ENCODE measurements at regions of chr4 and their contacts with region 1.

Region 1: DNA sequence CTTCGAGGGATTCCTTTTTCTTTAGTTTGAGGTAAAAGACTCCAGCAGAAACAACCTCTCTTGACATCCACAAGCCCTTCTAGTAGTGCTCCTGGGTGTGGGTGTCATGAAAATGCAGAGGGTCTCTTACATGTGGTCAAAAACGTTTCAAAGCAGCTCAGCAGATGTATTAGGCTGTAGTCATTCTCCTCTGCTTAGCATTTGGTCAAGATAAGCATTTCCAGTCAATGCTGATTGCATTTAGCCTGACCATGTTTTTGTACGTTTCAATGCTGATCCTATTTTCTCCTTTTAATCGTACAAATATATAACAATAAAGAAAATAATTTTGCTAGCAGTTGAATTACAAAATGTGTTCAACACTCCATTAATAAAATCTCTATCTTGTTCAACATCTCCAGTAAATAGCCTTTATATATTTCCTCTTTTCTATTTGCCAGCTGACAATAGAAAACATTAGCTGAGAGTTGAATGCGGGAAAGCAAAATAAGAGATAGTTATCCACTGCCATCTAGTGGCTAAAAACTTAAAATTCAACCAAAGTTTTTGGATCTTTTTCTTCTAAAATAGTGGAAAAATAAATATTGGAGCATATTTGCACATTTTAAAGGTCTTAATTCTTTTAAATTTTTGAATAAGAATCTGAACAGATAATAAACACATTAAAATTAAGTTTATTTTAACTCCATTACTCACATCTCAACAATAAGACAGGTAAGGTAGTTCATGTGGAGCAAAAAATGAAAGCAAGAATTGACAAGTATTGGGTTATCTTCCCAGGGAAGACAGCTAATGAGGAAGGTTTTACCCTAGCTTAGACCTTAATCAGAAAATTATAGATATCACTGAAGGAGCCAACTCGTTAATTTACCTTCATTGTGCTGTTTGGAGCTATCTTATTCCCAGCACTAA is 15.2 kb upstream of the PACRGL start:
- DNase-seq: no peak
- ATAC-seq: no peak
- H3K4me3 ChIP-seq: no peak overlapping the region
- H3K27ac ChIP-seq: no peak overlapping the region
- H3K4me1 ChIP-seq: no peaks in the 10 kb centered on the region
- H3K27me3 ChIP-seq: peaks cover 0 to 18% (median 0%) of the 10 kb centered on the region in 9 donors
- CTCF ChIP-seq: peak; percentile 47 to 81 (median 66)
- POLR2A ChIP-seq: no peak

Region 2: GRCh38 chr4:18689308-18690115 is 1995.6 kb before region 1 on chr4:
- intact Hi-C with region 1: loop called (anchors 2 to 10 kb)
- DNase-seq: peak in 2 of 5 donors; percentile 16 to 26
- ATAC-seq: peak in 1 of 4 donors; percentile 54
- H3K4me3 ChIP-seq: no peak overlapping the region
- H3K27ac ChIP-seq: no peak overlapping the region
- H3K4me1 ChIP-seq: peaks cover 0 to 10% (median 0%) of the 10 kb centered on the region in 12 donors
- H3K27me3 ChIP-seq: no peaks in the 10 kb centered on the region
- CTCF ChIP-seq: peak; percentile 75 to 89 (median 84)
- POLR2A ChIP-seq: no peak

Region 3: DNA sequence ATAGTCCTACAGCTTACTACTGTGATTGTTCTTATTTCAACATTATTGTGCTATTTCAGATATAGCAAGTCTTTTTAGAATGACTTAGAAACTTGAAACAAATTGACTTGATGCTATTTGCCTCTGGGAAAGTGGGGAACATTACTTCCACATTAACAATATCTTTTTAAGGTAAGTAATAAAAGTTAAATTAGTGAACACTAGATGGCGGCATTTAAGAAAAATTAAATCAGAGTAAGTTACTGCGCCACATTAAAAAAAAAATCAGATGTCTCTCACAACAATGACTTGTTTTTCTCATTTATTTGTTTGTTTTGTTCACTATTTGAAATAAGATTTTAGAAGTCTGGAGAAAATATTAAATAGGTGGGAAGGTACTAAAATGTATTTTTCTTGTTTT is 1460.3 kb before region 1 on chr4:
- intact Hi-C with region 1: loop called in 6 of 10 experiments (anchors 5 to 10 kb)
- DNase-seq: no peak
- ATAC-seq: no peak
- H3K4me3 ChIP-seq: no peak overlapping the region
- H3K27ac ChIP-seq: no peak overlapping the region
- H3K4me1 ChIP-seq: no peaks in the 10 kb centered on the region
- H3K27me3 ChIP-seq: no peaks in the 10 kb centered on the region
- CTCF ChIP-seq: peak; percentile 21 to 61 (median 39)
- POLR2A ChIP-seq: no peak

Region 4: GRCh38 chr4:20299515-20299914 is 385.6 kb before region 1 on chr4:
- intact Hi-C with region 1: loop called in 1 of 10 experiments (anchors 10 kb)
- DNase-seq: no peak
- ATAC-seq: no peak
- H3K4me3 ChIP-seq: no peak overlapping the region
- H3K27ac ChIP-seq: no peak overlapping the region
- H3K4me1 ChIP-seq: no peaks in the 10 kb centered on the region
- H3K27me3 ChIP-seq: no peaks in the 10 kb centered on the region
- CTCF ChIP-seq: peak in 6 of 12 donors; percentile 23 to 54 (median 34)
- POLR2A ChIP-seq: no peak

Region 5: GRCh38 chr4:20422398-20422797 is 262.7 kb before region 1 on chr4:
- intact Hi-C with region 1: loop called (anchors 2 to 10 kb)
- DNase-seq: peak in 2 of 5 donors; percentile 22 to 23
- ATAC-seq: peak in 2 of 4 donors; percentile 64 to 74
- H3K4me3 ChIP-seq: no peak overlapping the region
- H3K27ac ChIP-seq: no peak overlapping the region
- H3K4me1 ChIP-seq: peaks cover 0 to 6% (median 0%) of the 10 kb centered on the region in 12 donors
- H3K27me3 ChIP-seq: no peaks in the 10 kb centered on the region
- CTCF ChIP-seq: peak; percentile 15 to 57 (median 35)
- POLR2A ChIP-seq: no peak

Region 6: DNA sequence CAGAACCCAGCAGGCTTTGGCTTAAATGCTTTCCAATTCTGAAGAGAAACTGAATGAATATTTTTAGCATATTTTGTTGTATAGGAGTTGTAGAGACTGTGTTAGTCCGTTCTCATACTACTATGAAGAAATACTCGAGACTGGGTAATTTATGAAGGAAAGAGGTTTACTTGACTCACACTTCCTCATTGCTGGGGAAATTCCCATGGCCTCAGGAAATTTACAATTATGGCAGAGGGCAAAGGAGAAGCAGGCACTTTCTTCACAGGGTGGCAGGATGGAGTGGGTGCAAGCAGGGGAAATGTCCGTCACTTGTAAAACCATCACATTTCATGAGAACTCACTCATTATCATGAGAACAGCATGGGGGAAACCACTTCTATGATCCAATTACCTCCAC is 306.9 kb after region 1 on chr4:
- intact Hi-C with region 1: no loop called
- DNase-seq: no peak
- ATAC-seq: no peak
- H3K4me3 ChIP-seq: no peak overlapping the region
- H3K27ac ChIP-seq: no peak overlapping the region
- H3K4me1 ChIP-seq: no peaks in the 10 kb centered on the region
- H3K27me3 ChIP-seq: no peaks in the 10 kb centered on the region
- CTCF ChIP-seq: no peak
- POLR2A ChIP-seq: no peak